MCF 10A (cell line): ENCODE measurements at regions of chr20 and their contacts with region 1.

Region 1: GRCh38 chr20:16714751-16715150 is 15.1 kb upstream of the SNRPB2 start:
- DNase-seq: no peak
- H3K4me3 Mint-ChIP-seq: no peak overlapping the region
- H3K27ac Mint-ChIP-seq: no peak overlapping the region
- H3K4me1 Mint-ChIP-seq: no peaks in the 10 kb centered on the region
- H3K27me3 Mint-ChIP-seq: peaks cover 2% of the 10 kb centered on the region
- CTCF ChIP-seq: no peak

Region 2: DNA sequence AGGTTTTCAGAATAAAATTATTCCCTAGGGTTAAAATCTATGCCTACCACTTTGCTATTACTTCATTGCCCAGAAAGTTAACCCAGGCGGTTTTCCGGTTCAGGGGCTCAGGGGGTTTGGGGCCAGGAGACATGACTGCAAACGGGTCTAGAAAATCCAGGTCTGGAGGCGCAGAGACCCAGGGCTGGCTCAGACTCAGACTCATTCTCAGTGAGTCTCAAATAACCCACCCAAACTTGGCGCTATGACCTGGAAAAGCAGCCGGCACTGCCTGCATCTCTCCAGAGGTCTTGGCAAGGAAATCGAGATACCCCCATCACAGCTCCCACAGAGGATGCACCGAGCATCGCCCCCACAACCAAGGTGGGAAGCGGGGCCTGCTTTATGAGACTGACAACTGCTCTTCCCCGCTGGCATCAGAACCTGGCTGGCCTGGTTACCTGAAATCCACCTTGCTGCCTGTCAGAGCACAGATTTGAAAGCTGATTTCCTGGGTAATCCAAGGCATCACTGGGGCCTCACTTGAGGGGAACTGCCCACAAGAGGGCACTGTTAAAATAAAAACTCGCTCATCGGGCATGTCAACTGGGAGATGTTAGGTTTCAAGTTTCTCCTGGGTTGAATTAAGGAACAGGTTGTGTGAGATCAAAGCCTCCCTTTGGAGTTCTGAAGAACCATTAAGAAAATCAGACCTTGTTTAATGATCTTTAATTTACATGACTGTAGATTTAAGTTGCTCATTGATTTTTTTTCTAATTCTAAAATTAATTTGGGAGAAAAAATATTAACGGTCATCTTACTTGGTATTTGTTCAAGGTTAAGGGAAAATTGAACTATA is 196.6 kb before region 1 on chr20:
- CTCF ChIA-PET with region 1: no interaction called
- POLR2A ChIA-PET with region 1: no interaction called
- intact Hi-C with region 1: no loop called
- DNase-seq: peak; percentile 65
- H3K4me3 Mint-ChIP-seq: no peak overlapping the region
- H3K27ac Mint-ChIP-seq: no peak overlapping the region
- H3K4me1 Mint-ChIP-seq: no peaks in the 10 kb centered on the region
- H3K27me3 Mint-ChIP-seq: no peaks in the 10 kb centered on the region
- CTCF ChIP-seq: peak; percentile 66

Region 3: GRCh38 chr20:16966276-16966880 is 251.6 kb after region 1 on chr20:
- CTCF ChIA-PET with region 1: no interaction called
- POLR2A ChIA-PET with region 1: no interaction called
- intact Hi-C with region 1: loop called (anchors 5 kb)
- DNase-seq: no peak
- H3K4me3 Mint-ChIP-seq: no peak overlapping the region
- H3K27ac Mint-ChIP-seq: no peak overlapping the region
- H3K4me1 Mint-ChIP-seq: no peaks in the 10 kb centered on the region
- H3K27me3 Mint-ChIP-seq: peaks cover 23% of the 10 kb centered on the region
- CTCF ChIP-seq: no peak